GM10248 (cell line): ENCODE measurements at regions of chr2 and their contacts with region 1.

Region 1: GRCh38 chr2:58460670-58461069 is 219.5 kb upstream of the FANCL start:
- DNase-seq: no peak
- CTCF ChIP-seq: no peak

Region 2: GRCh38 chr2:58436872-58437271 is 23.8 kb before region 1 on chr2:
- CTCF ChIA-PET with region 1: no interaction called
- POLR2A ChIA-PET with region 1: no interaction called
- DNase-seq: no peak
- CTCF ChIP-seq: no peak

Region 3: GRCh38 chr2:58448065-58448507 is 12.6 kb before region 1 on chr2:
- CTCF ChIA-PET with region 1: interaction called, 34 read pairs
- POLR2A ChIA-PET with region 1: no interaction called
- DNase-seq: peak; percentile 22
- CTCF ChIP-seq: peak; percentile 62